Ovary (tissue), 10 donors: ENCODE measurements at regions of chr4 and their contacts with region 1.

Region 1: GRCh38 chr4:47572981-47573380 is 87.9 kb downstream of the ATP10D start:
- DNase-seq: no peak
- H3K4me3 ChIP-seq: no peak overlapping the region
- H3K27ac ChIP-seq: no peak overlapping the region
- H3K4me1 ChIP-seq: no peaks in the 10 kb centered on the region
- H3K27me3 ChIP-seq: no peaks in the 10 kb centered on the region
- CTCF ChIP-seq: no peak
- EP300 ChIP-seq: no peak
- POLR2A ChIP-seq: no peak

Region 2: GRCh38 chr4:47519239-47519883 is 53.6 kb before region 1 on chr4:
- intact Hi-C with region 1: no loop called
- DNase-seq: no peak
- H3K4me3 ChIP-seq: no peak overlapping the region
- H3K27ac ChIP-seq: no peak overlapping the region
- H3K4me1 ChIP-seq: no peaks in the 10 kb centered on the region
- H3K27me3 ChIP-seq: no peaks in the 10 kb centered on the region
- CTCF ChIP-seq: no peak
- EP300 ChIP-seq: no peak
- POLR2A ChIP-seq: no peak

Region 3: GRCh38 chr4:47551682-47552081 is 21.3 kb before region 1 on chr4:
- intact Hi-C with region 1: loop called in 1 of 4 experiments (anchors 1 kb)
- DNase-seq: no peak
- H3K4me3 ChIP-seq: no peak overlapping the region
- H3K27ac ChIP-seq: no peak overlapping the region
- H3K4me1 ChIP-seq: no peaks in the 10 kb centered on the region
- H3K27me3 ChIP-seq: no peaks in the 10 kb centered on the region
- CTCF ChIP-seq: no peak
- EP300 ChIP-seq: no peak
- POLR2A ChIP-seq: no peak

Region 4: DNA sequence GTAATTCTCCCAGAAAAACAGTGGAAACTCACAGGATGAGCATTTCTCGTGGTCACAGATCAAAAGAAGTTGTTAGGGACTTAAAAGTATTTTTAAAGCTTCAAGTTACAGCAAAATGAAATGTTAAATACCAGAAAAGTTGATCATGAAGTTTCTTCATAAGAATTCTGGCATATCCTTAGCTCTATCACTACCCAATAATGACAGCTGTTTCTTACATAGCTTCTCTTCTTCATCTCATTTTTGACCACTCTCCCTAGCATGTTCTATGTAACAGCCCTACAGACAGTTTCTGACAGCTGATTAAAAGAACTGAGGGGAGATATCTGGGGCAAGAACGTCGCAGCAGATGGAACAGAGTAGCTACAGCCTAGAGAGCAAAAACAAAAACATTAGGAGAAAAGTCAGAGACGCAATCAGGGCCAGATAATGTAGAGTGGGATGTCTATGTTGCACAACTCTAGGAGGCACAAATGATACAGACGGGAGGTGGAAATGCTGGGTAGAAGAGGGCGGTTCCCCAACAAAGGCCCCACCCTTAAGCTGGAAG is 156.2 kb after region 1 on chr4:
- intact Hi-C with region 1: no loop called
- DNase-seq: no peak
- H3K4me3 ChIP-seq: no peak overlapping the region
- H3K27ac ChIP-seq: no peak overlapping the region
- H3K4me1 ChIP-seq: no peaks in the 10 kb centered on the region
- H3K27me3 ChIP-seq: no peaks in the 10 kb centered on the region
- CTCF ChIP-seq: no peak
- EP300 ChIP-seq: no peak
- POLR2A ChIP-seq: no peak

Region 5: GRCh38 chr4:47824840-47825239 is 251.9 kb after region 1 on chr4:
- intact Hi-C with region 1: no loop called
- DNase-seq: no peak
- H3K4me3 ChIP-seq: no peak overlapping the region
- H3K27ac ChIP-seq: no peak overlapping the region
- H3K4me1 ChIP-seq: no peaks in the 10 kb centered on the region
- H3K27me3 ChIP-seq: no peaks in the 10 kb centered on the region
- CTCF ChIP-seq: no peak
- EP300 ChIP-seq: no peak
- POLR2A ChIP-seq: no peak

Region 6: GRCh38 chr4:47933840-47934239 is 360.9 kb after region 1 on chr4:
- intact Hi-C with region 1: no loop called
- DNase-seq: no peak
- H3K4me3 ChIP-seq: no peak overlapping the region
- H3K27ac ChIP-seq: no peak overlapping the region
- H3K4me1 ChIP-seq: no peaks in the 10 kb centered on the region
- H3K27me3 ChIP-seq: no peaks in the 10 kb centered on the region
- CTCF ChIP-seq: peak; percentile 27 to 45 (median 31)
- EP300 ChIP-seq: no peak
- POLR2A ChIP-seq: no peak